K562 (cell line): ENCODE measurements at regions of chr7 and their contacts with region 1.

Region 1: DNA sequence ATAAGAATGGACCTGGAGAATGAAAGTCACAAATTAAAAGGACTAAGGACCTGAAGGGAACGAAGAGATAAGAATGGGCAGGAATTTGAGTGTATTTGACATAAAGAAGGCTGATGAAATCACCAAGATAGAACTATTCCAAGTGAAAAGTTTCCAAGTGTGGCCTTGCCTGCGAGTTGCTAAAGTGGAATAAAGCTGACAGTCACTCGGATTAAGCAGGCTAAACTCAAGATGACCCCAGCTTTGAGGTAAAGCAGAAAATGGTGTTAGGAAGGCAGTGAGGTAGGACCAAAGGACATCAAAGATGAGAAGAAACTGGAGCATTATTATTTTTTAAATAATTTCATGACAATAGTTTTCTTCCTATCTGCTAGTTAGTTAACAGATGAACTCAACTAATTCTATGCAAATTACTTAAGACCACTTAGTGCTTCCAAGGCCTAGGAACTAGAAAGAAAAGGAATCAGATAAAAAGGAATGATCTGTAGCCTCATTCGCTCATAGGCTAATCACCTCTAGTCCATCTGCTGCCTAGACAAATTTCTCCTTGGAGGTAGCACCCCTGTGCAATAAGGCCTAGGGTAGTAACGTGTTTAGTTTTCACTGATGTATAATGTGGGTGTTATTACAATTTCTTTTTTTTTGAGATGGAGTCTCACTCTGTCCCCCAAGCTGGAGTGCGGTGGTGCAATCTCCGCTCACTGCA is 34.5 kb downstream of the EZH2 start:
- DNase-seq: peak in 2 of 4 experiments; percentile 37 to 56
- ATAC-seq: peak; percentile 43
- H3K4me3 ChIP-seq: no peak overlapping the region
- H3K27ac ChIP-seq: peak overlapping the region; percentile 6; the same call in 2 of the 3 replicates
- H3K4me1 ChIP-seq: peaks cover 24 to 63% of the 10 kb centered on the region in 2 experiments
- H3K27me3 ChIP-seq: no peaks in the 10 kb centered on the region
- CTCF ChIP-seq: no peak
- EP300 ChIP-seq: no peak; the same call in 1 of the 2 replicates
- POLR2A ChIP-seq: no peak
- RAD21 ChIP-seq: no peak

Region 2: DNA sequence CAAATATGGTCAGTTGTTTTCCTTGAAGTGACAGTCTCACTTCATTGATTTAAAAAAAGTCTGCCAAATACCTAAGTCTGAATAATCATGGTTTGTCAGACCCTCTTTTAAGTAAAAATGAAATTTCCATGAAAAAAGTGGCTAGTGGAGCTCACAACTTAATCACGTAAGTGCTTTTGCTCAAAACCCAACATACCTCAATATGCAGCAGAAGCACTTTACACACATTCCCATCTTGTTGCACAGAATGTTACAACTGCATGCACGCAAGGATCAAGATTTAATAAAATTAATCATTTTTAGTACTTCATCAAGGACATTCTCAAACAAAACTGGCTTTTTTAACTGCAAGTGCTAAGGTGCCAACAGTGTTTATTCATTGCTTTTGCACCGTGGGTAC is 12.9 kb after region 1 on chr7:
- CTCF ChIA-PET with region 1: no interaction called
- POLR2A ChIA-PET with region 1: interaction called, 15 read pairs
- in situ Hi-C with region 1: no loop called
- intact Hi-C with region 1: no loop called
- DNase-seq: no peak
- ATAC-seq: no peak
- H3K4me3 ChIP-seq: no peak overlapping the region
- H3K27ac ChIP-seq: no peak overlapping the region
- H3K4me1 ChIP-seq: peaks cover 12 to 18% of the 10 kb centered on the region in 2 experiments; a peak in 4 of 5 replicates
- H3K27me3 ChIP-seq: no peaks in the 10 kb centered on the region
- CTCF ChIP-seq: no peak
- EP300 ChIP-seq: no peak
- POLR2A ChIP-seq: no peak
- RAD21 ChIP-seq: no peak